ENCODE measurements at regions of chr13 and their contacts with region 1.

Region 1: DNA sequence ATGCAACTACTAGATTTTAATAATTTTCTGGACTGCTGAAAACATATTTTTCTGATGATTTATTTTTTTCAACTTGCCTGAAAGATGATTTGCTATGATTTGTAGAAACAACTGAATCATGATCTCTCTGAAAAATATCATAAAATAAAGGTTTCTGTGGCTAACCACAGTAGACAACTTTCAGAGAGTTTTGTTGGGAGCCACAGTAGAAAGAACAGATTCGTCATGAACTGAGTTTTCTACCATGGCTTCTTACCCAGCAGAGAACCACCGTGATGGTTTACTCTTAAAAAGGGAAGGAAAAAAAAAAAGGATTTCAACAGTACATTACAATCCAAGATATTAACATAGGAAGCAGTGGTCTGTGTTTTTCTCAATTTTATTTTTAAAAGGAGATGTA is 18.0 kb downstream of the ZAR1L start:
- DNase-seq: no peak
- H3K4me3 Mint-ChIP-seq: no peak overlapping the region
- H3K27ac Mint-ChIP-seq: no peak overlapping the region
- H3K4me1 Mint-ChIP-seq: peaks cover 18% of the 10 kb centered on the region
- H3K27me3 Mint-ChIP-seq: peaks cover 17% of the 10 kb centered on the region

Region 2: DNA sequence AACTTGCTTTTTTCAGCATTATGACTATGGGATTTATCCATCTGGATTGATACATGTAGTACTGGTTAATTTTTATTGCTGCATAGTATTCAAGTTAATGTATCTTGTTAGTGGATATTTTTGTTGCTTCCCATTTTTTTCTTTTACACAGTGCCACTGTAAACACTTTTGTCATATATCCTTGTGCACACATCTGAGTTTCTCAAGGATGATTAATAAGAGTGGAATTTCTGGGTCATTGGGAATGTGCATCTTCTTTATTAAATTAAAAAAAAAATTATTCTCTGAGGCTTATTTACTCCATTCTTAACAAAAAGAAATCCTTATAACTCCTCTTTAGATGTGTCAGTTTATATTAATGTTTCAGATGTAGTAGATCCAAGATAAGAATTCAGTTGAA is 1070.1 kb before region 1 on chr13:
- intact Hi-C with region 1: no loop called
- DNase-seq: no peak
- H3K4me3 Mint-ChIP-seq: no peak overlapping the region
- H3K27ac Mint-ChIP-seq: no peak overlapping the region
- H3K4me1 Mint-ChIP-seq: no peaks in the 10 kb centered on the region
- H3K27me3 Mint-ChIP-seq: no peaks in the 10 kb centered on the region

Region 3: DNA sequence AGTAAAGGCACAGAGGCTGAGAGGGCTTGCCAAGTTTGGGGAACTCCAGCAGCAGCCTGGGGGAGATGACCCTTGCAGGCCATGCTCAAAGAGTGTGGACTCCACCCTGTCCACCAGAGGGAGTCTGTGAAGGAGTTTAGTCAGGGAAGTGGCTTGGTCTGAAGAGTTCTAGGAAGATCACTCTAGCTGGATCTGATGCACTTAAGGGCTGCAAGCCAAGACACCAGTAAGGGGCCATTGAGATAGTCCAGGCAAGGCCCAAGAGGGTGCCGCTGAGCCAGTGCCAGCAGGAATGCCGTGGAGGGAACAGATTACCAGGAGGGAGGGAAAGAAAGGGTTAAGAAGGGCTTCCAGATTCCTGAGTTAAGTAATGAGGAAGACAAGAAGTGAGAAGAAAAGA is 50.7 kb before region 1 on chr13:
- intact Hi-C with region 1: loop called (anchors 2 kb)
- DNase-seq: no peak
- H3K4me3 Mint-ChIP-seq: no peak overlapping the region
- H3K27ac Mint-ChIP-seq: no peak overlapping the region
- H3K4me1 Mint-ChIP-seq: no peaks in the 10 kb centered on the region
- H3K27me3 Mint-ChIP-seq: peaks cover 2% of the 10 kb centered on the region

Region 4: DNA sequence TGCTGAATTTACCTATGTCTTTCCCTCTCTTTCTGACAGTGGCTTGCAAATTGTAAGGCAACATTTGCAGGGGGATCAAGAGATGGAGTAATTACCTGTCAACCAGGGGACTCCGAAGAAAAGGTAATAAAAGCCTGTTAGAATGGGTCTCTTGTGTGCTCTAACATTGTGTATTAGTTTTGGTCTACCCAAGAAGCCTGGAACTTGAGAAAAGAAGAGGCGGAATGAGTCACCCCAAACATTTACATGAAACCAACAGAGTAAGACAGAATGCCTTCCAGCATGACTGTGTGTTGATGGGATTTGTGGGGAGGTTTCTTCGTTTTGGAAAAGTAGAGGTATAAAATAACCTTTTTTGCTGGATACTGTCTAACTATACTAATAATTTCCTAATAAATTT is 18.8 kb before region 1 on chr13:
- intact Hi-C with region 1: loop called (anchors 1 kb)
- DNase-seq: no peak
- H3K4me3 Mint-ChIP-seq: no peak overlapping the region
- H3K27ac Mint-ChIP-seq: no peak overlapping the region
- H3K4me1 Mint-ChIP-seq: peaks cover 5% of the 10 kb centered on the region
- H3K27me3 Mint-ChIP-seq: no peaks in the 10 kb centered on the region